ENCODE measurements at regions of chr17 and their contacts with region 1.

Region 1: GRCh38 chr17:63697341-63698286 is 2.3 kb downstream of the LIMD2 start:
- DNase-seq: peak; percentile 82
- ATAC-seq: peak; percentile 60
- H3K4me3 ChIP-seq: peak overlapping the region; percentile 88
- H3K27ac ChIP-seq: peak overlapping the region; percentile 94
- H3K4me1 ChIP-seq: peaks cover 36% of the 10 kb centered on the region
- H3K27me3 ChIP-seq: no peaks in the 10 kb centered on the region
- CTCF ChIP-seq: peak; percentile 75 to 93 (median 80)
- EP300 ChIP-seq: peak in 1 of 2 experiments; percentile 50; a peak in 2 of 4 replicates
- POLR2A ChIP-seq: peak; percentile 70
- RAD21 ChIP-seq: peak; percentile 44

Region 2: DNA sequence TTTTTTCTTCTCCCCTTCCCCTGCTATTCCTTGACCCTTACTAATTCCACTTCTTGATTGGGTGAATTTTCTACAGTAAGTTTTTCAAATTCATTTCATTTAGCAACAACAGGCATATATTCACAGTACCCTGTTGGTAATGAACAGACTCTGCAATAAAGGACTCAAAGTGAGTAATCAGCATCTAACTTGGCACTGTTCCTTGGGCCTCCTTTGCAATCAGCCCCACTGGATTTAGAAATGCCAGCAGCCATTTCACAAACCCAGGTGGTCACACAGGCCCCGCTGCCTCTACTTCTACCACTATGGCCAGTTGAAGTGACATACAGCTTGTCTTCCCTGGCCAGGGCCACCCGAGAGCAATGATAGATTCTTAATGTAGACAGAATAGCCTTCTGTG is 365.3 kb before region 1 on chr17:
- CTCF ChIA-PET with region 1: no interaction called
- POLR2A ChIA-PET with region 1: no interaction called
- RAD21 ChIA-PET with region 1: no interaction called
- SMC1A ChIA-PET with region 1: no interaction called
- in situ Hi-C with region 1: no loop called
- intact Hi-C with region 1: no loop called
- DNase-seq: no peak
- ATAC-seq: no peak
- H3K4me3 ChIP-seq: no peak overlapping the region
- H3K27ac ChIP-seq: no peak overlapping the region
- H3K4me1 ChIP-seq: no peaks in the 10 kb centered on the region
- H3K27me3 ChIP-seq: no peaks in the 10 kb centered on the region
- CTCF ChIP-seq: no peak
- EP300 ChIP-seq: no peak
- POLR2A ChIP-seq: no peak
- RAD21 ChIP-seq: no peak

Region 3: DNA sequence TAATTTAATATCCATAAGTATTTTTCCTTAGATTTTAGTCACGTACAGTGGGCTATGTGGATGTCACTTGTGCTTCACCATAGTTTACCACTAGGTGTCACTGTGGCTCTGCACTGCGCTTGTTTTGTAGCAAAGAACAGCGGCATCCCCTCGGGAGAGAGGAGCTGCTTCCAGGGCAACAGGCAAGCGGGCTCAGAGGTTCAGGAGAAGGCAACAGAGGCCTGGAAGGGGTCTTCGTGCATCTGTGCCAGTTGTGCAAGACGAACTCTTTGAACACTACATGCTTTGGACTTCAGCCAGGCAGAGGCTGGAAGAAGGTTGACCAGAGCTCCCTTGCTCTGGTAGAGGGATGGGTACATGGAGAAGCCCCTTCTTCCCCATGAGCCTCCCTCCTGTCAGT is 272.1 kb before region 1 on chr17:
- CTCF ChIA-PET with region 1: interaction called, 3 read pairs
- POLR2A ChIA-PET with region 1: no interaction called
- RAD21 ChIA-PET with region 1: interaction called, 8 read pairs
- SMC1A ChIA-PET with region 1: interaction called, 3 read pairs
- in situ Hi-C with region 1: no loop called
- intact Hi-C with region 1: loop called (anchors 10 kb)
- DNase-seq: peak; percentile 39
- ATAC-seq: peak; percentile 95
- H3K4me3 ChIP-seq: no peak overlapping the region
- H3K27ac ChIP-seq: no peak overlapping the region
- H3K4me1 ChIP-seq: no peaks in the 10 kb centered on the region
- H3K27me3 ChIP-seq: no peaks in the 10 kb centered on the region; a peak in 1 of 4 replicates
- CTCF ChIP-seq: peak; percentile 90 to 97 (median 90)
- EP300 ChIP-seq: no peak
- POLR2A ChIP-seq: no peak
- RAD21 ChIP-seq: peak; percentile 98

Region 4: DNA sequence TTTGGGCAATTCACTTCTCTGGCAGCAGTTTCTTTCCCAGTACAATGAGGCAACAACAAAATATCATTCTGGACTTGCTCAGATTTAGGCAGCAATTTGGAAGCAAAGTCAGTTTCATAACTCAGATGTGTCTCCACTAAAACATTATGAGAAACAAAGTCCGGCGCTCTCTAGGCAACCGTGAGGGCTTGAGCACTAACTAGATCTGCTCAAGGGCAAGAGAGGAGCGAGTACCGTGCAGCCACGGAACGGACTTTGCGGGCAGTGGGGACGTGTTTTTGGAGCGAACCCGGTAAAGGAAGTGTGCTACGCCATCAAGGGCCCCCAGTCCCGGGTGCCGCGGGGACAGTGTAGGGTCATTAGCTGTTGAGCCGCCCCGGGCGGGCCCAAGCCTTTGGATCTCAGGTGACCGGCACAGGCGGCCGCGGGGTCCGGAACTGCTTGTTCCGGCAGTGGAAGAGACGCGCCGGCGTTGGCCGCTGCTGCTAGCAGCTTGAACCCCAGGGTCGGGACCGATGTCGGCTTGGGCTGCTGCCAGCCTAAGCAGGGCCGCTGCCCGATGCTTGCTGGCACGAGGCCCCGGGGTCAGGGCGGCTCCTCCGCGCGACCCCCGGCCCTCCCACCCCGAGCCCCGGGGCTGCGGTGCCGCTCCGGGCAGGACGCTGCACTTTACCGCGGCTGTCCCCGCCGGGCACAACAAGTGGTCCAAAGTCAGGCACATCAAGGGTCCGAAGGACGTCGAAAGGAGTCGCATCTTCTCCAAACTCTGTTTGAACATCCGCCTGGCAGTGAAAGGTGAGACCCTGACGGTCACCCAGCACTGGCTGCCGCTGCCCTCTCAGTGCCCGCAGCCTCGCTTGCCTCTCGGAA is 96.8 kb before region 1 on chr17 and contains the start of gene TACO1:
- CTCF ChIA-PET with region 1: no interaction called
- POLR2A ChIA-PET with region 1: no interaction called
- RAD21 ChIA-PET with region 1: no interaction called
- SMC1A ChIA-PET with region 1: no interaction called
- in situ Hi-C with region 1: no loop called
- intact Hi-C with region 1: no loop called
- DNase-seq: peak; percentile 48
- ATAC-seq: peak; percentile 95
- H3K4me3 ChIP-seq: peak within 1 kb of the TSS; percentile 86
- H3K27ac ChIP-seq: peak within 1 kb of the TSS; percentile 59
- H3K4me1 ChIP-seq: no peaks in the 10 kb centered on the region
- H3K27me3 ChIP-seq: no peaks in the 10 kb centered on the region
- CTCF ChIP-seq: no peak
- EP300 ChIP-seq: no peak
- POLR2A ChIP-seq: peak; percentile 79
- RAD21 ChIP-seq: no peak
- polyA plus RNA-seq, gene TACO1: 8.5 to 16.1 TPM

Region 5: GRCh38 chr17:63621766-63622519 is 75.7 kb before region 1 on chr17 and contains the start of gene MAP3K3:
- CTCF ChIA-PET with region 1: interaction called, 12 read pairs
- POLR2A ChIA-PET with region 1: interaction called, 10 read pairs
- RAD21 ChIA-PET with region 1: interaction called, 15 read pairs
- SMC1A ChIA-PET with region 1: interaction called, 5 read pairs
- in situ Hi-C with region 1: no loop called
- intact Hi-C with region 1: loop called (anchors 2 kb)
- DNase-seq: peak; percentile 99
- ATAC-seq: peak; percentile 94
- H3K4me3 ChIP-seq: peak within 1 kb of the TSS; percentile 99
- H3K27ac ChIP-seq: peak within 1 kb of the TSS; percentile 67
- H3K4me1 ChIP-seq: peaks cover 5% of the 10 kb centered on the region; the same call in 1 of the 2 replicates
- H3K27me3 ChIP-seq: no peaks in the 10 kb centered on the region
- CTCF ChIP-seq: 0 out of 6 replicates have a peak, but pooled peaks of 1 of the 3 experiments have one; percentile 17
- EP300 ChIP-seq: no peak
- POLR2A ChIP-seq: peak; percentile 92
- RAD21 ChIP-seq: no peak
- polyA plus RNA-seq, gene MAP3K3: 1.6 to 2.0 TPM

Region 6: GRCh38 chr17:63741221-63742049 is 43.8 kb after region 1 on chr17 and contains the start of gene STRADA:
- CTCF ChIA-PET with region 1: interaction called, 11 read pairs
- POLR2A ChIA-PET with region 1: interaction called, 42 read pairs
- RAD21 ChIA-PET with region 1: interaction called, 24 read pairs
- SMC1A ChIA-PET with region 1: interaction called, 11 read pairs
- in situ Hi-C with region 1: no loop called
- intact Hi-C with region 1: loop called (anchors 1 kb)
- DNase-seq: peak; percentile 95
- ATAC-seq: peak; percentile 90
- H3K4me3 ChIP-seq: peak within 1 kb of the TSS; percentile 96
- H3K27ac ChIP-seq: peak within 1 kb of the TSS; percentile 97
- H3K4me1 ChIP-seq: peaks cover 11% of the 10 kb centered on the region
- H3K27me3 ChIP-seq: no peaks in the 10 kb centered on the region
- CTCF ChIP-seq: no peak
- EP300 ChIP-seq: peak; percentile 55 to 74; a peak in 3 of 4 replicates
- POLR2A ChIP-seq: peak; percentile 98
- RAD21 ChIP-seq: no peak
- polyA plus RNA-seq, gene STRADA: 13.3 to 15.6 TPM

Region 7: GRCh38 chr17:63773381-63774140 is 75.9 kb after region 1 on chr17 and contains the start of gene CCDC47:
- CTCF ChIA-PET with region 1: interaction called, 8 read pairs
- POLR2A ChIA-PET with region 1: interaction called, 28 read pairs
- RAD21 ChIA-PET with region 1: interaction called, 19 read pairs
- SMC1A ChIA-PET with region 1: interaction called, 11 read pairs
- in situ Hi-C with region 1: no loop called
- intact Hi-C with region 1: loop called (anchors 1 kb)
- DNase-seq: peak; percentile 98
- ATAC-seq: peak; percentile 90
- H3K4me3 ChIP-seq: peak within 1 kb of the TSS; percentile 100
- H3K27ac ChIP-seq: peak within 1 kb of the TSS; percentile 84
- H3K4me1 ChIP-seq: peaks cover 3% of the 10 kb centered on the region
- H3K27me3 ChIP-seq: no peaks in the 10 kb centered on the region
- CTCF ChIP-seq: no peak
- EP300 ChIP-seq: peak in 1 of 2 experiments; percentile 52; a peak in 1 of 4 replicates
- POLR2A ChIP-seq: peak; percentile 96
- RAD21 ChIP-seq: no peak
- polyA plus RNA-seq, gene CCDC47: 13.6 to 17.4 TPM

Region 8: GRCh38 chr17:63842540-63843386 is 145.1 kb after region 1 on chr17 and contains the start of gene SMARCD2:
- CTCF ChIA-PET with region 1: interaction called, 10 read pairs
- POLR2A ChIA-PET with region 1: interaction called, 8 read pairs
- RAD21 ChIA-PET with region 1: interaction called, 4 read pairs
- SMC1A ChIA-PET with region 1: no interaction called
- in situ Hi-C with region 1: no loop called
- intact Hi-C with region 1: loop called (anchors 5 kb)
- DNase-seq: peak; percentile 90
- ATAC-seq: peak; percentile 90
- H3K4me3 ChIP-seq: peak within 1 kb of the TSS; percentile 97
- H3K27ac ChIP-seq: peak within 1 kb of the TSS; percentile 80
- H3K4me1 ChIP-seq: peaks cover 18% of the 10 kb centered on the region
- H3K27me3 ChIP-seq: no peaks in the 10 kb centered on the region
- CTCF ChIP-seq: no peak
- EP300 ChIP-seq: peak; percentile 16 to 58; a peak in 2 of 4 replicates
- POLR2A ChIP-seq: peak; percentile 92
- RAD21 ChIP-seq: no peak
- polyA plus RNA-seq, gene SMARCD2: 2.4 to 5.6 TPM